ENCODE measurements at regions of chr2 and their contacts with region 1.

Region 1: DNA sequence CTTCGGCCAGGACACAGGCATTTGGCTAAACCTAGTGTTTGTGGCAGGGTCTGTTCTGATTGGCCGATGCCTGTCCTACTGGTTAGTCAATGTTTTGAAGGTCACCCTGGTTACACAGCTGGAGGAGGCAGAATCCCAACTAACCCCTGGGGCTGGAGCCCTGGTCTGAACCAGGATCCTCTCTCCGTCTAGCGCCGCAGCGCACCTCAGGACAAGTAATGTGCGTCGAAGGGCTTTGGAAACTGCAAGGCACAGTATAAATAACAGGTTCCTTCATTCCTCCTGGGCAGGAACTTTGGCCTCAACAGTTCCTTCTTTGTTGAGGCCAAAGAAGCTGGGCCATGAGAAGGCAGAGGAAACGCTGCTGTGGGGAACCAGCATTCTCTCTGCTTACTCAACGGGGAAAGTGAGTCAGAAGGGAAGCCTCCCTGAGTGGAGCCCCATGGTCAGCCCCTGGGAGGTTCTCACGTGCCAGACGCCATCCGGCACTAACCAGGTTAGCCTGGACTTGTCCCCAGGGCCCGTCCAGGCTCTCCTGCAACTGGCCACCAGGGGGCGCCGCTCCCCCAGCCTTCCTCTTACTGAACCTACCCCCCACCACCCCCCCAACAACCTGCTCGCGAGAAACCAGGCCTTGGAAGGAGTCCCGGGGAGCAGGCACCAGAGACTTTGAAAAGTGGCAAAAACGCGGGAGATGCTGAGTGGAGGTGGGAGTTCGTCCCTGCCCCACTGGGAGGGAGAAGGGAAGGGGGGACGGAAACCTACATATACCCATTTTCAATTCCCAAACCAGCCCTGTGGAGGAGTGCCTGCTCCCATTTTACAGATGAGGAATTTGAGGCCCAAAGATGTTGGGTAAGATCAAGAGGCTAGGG is 19.8 kb downstream of the TEX44 start:
- DNase-seq: peak; percentile 76 to 90
- H3K4me3 ChIP-seq: peak overlapping the region; percentile 29; the same call in 1 of the 2 replicates
- H3K27ac ChIP-seq: peak overlapping the region; percentile 98
- H3K4me1 ChIP-seq: peaks cover 45% of the 10 kb centered on the region
- H3K27me3 ChIP-seq: no peaks in the 10 kb centered on the region
- CTCF ChIP-seq: peak; percentile 97

Region 2: DNA sequence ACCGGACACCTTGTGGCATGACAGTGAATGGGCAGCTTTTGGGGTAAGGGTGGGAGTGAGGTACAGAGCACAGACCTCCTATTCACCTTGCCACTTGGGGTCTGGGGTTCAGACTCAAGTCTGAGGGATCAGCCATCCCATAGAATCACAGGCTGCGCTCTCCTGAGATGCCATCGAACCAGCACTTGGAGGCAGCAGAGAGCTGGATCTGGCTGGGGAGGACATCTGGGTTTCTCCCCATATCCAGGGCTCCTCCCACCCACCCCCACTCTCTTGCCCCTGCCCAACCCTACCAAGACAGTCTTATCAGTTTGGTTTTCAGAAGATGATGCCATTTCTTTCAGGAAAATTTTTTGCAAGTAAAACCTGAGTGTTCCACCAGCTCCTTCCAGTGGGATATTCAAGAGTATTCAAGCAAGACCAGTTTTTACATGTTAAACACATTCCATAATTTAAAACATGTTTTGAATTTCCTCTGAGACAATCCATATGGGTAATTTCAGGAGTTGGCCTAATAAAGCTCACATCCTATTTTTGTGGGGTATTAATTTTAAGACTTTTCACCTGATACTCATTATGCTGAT is 48.9 kb before region 1 on chr2:
- CTCF ChIA-PET with region 1: no interaction called
- POLR2A ChIA-PET with region 1: no interaction called
- intact Hi-C with region 1: loop called (anchors 1 kb)
- DNase-seq: peak in 1 of 2 experiments; percentile 61
- H3K4me3 ChIP-seq: no peak overlapping the region
- H3K27ac ChIP-seq: no peak overlapping the region
- H3K4me1 ChIP-seq: no peaks in the 10 kb centered on the region
- H3K27me3 ChIP-seq: no peaks in the 10 kb centered on the region
- CTCF ChIP-seq: peak; percentile 62

Region 3: DNA sequence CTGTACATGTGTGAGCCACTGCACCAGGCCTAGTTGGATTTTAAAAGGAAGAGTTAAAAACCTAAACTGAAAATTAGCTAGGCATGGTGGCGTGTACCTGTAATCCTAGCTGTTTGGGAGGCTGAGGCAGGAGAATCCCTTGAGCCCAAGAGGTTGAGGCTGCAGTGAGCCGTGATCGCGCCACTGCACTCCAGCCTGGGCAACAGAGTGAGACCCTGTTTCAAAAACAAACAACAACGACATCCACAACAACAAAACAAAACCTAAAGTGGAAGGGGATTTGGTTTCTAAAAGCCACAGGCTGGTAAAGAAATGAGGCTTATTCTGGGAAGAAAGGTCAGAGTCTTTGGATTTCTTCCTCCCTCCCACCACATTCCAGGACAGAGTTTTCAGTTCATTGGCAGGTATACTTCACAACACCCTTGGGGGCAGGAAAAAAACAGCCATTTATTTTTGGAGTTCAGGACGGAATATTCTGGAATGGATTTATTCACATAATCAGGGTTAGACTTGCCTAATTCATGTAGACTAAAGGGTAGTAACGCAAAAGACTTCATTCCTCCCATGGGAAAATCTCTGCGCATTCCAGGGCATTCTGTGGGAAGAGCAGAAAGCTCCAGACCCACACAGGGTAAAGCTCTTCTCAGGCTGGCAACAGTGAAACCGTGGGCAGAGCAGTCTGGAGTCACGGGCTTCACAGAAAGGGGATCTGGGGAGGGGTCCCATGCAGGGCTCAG is 15.1 kb after region 1 on chr2:
- CTCF ChIA-PET with region 1: no interaction called
- POLR2A ChIA-PET with region 1: no interaction called
- intact Hi-C with region 1: no loop called
- DNase-seq: no peak
- H3K4me3 ChIP-seq: no peak overlapping the region
- H3K27ac ChIP-seq: no peak overlapping the region
- H3K4me1 ChIP-seq: peaks cover 22% of the 10 kb centered on the region
- H3K27me3 ChIP-seq: no peaks in the 10 kb centered on the region
- CTCF ChIP-seq: no peak

Region 4: GRCh38 chr2:231648587-231649174 is 36.3 kb after region 1 on chr2:
- CTCF ChIA-PET with region 1: interaction called, 4 read pairs
- POLR2A ChIA-PET with region 1: interaction called, 5 read pairs
- intact Hi-C with region 1: loop called (anchors 1 kb)
- DNase-seq: peak; percentile 70 to 89
- H3K4me3 ChIP-seq: no peak overlapping the region
- H3K27ac ChIP-seq: no peak overlapping the region
- H3K4me1 ChIP-seq: peaks cover 35% of the 10 kb centered on the region
- H3K27me3 ChIP-seq: no peaks in the 10 kb centered on the region
- CTCF ChIP-seq: peak; percentile 85

Region 5: GRCh38 chr2:231667496-231667895 is 55.1 kb after region 1 on chr2:
- CTCF ChIA-PET with region 1: interaction called, 8 read pairs
- POLR2A ChIA-PET with region 1: interaction called, 17 read pairs
- intact Hi-C with region 1: loop called (anchors 1 kb)
- DNase-seq: no peak
- H3K4me3 ChIP-seq: peak overlapping the region; percentile 62; the same call in 1 of the 2 replicates
- H3K27ac ChIP-seq: peak overlapping the region; percentile 96
- H3K4me1 ChIP-seq: peaks cover 46% of the 10 kb centered on the region
- H3K27me3 ChIP-seq: no peaks in the 10 kb centered on the region
- CTCF ChIP-seq: no peak

Region 6: GRCh38 chr2:231706731-231707624 is 94.6 kb after region 1 on chr2:
- CTCF ChIA-PET with region 1: no interaction called
- POLR2A ChIA-PET with region 1: interaction called, 9 read pairs
- intact Hi-C with region 1: loop called (anchors 1 kb)
- DNase-seq: peak; percentile 92 to 97
- H3K4me3 ChIP-seq: peak overlapping the region; percentile 68
- H3K27ac ChIP-seq: peak overlapping the region; percentile 99
- H3K4me1 ChIP-seq: peaks cover 21% of the 10 kb centered on the region
- H3K27me3 ChIP-seq: no peaks in the 10 kb centered on the region
- CTCF ChIP-seq: peak; percentile 83

Region 7: GRCh38 chr2:231745303-231746038 is 133.1 kb after region 1 on chr2:
- CTCF ChIA-PET with region 1: no interaction called
- POLR2A ChIA-PET with region 1: no interaction called
- intact Hi-C with region 1: no loop called
- DNase-seq: no peak
- H3K4me3 ChIP-seq: no peak overlapping the region
- H3K27ac ChIP-seq: no peak overlapping the region
- H3K4me1 ChIP-seq: no peaks in the 10 kb centered on the region
- H3K27me3 ChIP-seq: no peaks in the 10 kb centered on the region
- CTCF ChIP-seq: no peak

Region 8: DNA sequence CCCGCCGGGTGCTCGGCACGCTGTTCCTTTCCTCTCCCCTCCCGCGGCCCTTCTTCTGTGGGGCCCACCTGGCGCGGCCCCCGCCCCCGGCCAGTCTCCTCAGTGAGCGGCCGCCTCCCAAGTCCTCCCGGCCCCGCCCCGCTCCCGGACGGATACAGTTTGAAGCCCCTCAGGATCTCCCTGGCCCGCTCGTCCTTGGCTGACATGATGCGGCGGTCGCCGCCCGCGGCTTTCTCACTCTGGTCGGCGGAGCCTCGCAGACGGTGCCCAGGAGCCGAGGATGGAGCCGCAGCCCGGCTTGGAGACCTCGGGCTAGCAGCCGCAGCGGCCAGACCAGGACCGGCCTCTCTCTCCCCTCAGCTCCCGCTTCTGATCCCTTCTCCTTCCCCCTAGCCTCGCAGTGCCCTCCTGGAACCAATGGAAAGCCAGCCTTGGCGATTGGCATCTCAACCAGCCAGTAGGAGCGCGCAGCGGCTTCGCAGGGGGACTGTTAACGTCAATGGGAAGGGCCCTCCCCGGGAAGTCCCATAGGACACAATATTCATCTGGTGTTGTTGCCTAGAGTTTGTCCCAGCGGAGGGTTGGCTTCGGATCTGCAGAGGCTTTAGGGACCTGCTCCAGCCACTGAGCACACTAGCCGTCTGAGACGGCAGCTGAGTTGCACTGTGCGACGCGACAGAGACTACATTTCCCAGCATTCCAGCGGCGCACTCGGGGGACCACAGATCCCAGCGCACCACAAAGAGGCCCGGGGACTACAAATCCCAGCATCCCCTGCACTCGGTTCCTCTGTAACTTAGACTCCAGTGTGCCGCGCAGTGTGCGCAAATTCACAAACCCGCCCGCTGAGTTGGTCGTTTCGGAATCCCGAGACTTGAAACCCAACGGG is 168.7 kb after region 1 on chr2 and contains the start of gene PDE6D:
- CTCF ChIA-PET with region 1: no interaction called
- POLR2A ChIA-PET with region 1: interaction called, 7 read pairs
- intact Hi-C with region 1: loop called (anchors 2 kb)
- DNase-seq: peak; percentile 93 to 98
- H3K4me3 ChIP-seq: peak within 1 kb of the TSS; percentile 78
- H3K27ac ChIP-seq: no peak within 1 kb of the TSS
- H3K4me1 ChIP-seq: peaks cover 20% of the 10 kb centered on the region
- H3K27me3 ChIP-seq: no peaks in the 10 kb centered on the region
- CTCF ChIP-seq: no peak
- total RNA-seq, gene PDE6D: 32.2 and 32.9 TPM in 2 replicates

Measured in PC-9 (cell line).